ENCODE measurements at regions of chr12 and their contacts with region 1.

Region 1: GRCh38 chr12:8078398-8078797 is 3.7 kb upstream of the NECAP1 start:
- DNase-seq: peak; percentile 84
- H3K4me3 ChIP-seq: no peak overlapping the region
- H3K27ac ChIP-seq: no peak overlapping the region
- H3K4me1 ChIP-seq: peaks cover 22% of the 10 kb centered on the region
- H3K27me3 ChIP-seq: no peaks in the 10 kb centered on the region
- CTCF ChIP-seq: peak; percentile 28 to 49
- POLR2A ChIP-seq: no peak

Region 2: GRCh38 chr12:7832059-7832696 is 246.2 kb before region 1 on chr12:
- CTCF ChIA-PET with region 1: interaction called, 11 read pairs
- POLR2A ChIA-PET with region 1: no interaction called
- dilution Hi-C with region 1: no loop called
- intact Hi-C with region 1: no loop called
- DNase-seq: peak; percentile 58
- H3K4me3 ChIP-seq: no peak overlapping the region
- H3K27ac ChIP-seq: no peak overlapping the region
- H3K4me1 ChIP-seq: no peaks in the 10 kb centered on the region
- H3K27me3 ChIP-seq: peaks cover 0 to 2% of the 10 kb centered on the region in 2 experiments
- CTCF ChIP-seq: peak; percentile 44 to 45
- POLR2A ChIP-seq: no peak

Region 3: GRCh38 chr12:8026291-8026900 is 52.0 kb before region 1 on chr12:
- CTCF ChIA-PET with region 1: interaction called, 7 read pairs
- POLR2A ChIA-PET with region 1: no interaction called
- dilution Hi-C with region 1: no loop called
- intact Hi-C with region 1: loop called (anchors 2 kb)
- DNase-seq: peak; percentile 99
- H3K4me3 ChIP-seq: peak overlapping the region; percentile 57 to 97 (median 77)
- H3K27ac ChIP-seq: peak overlapping the region; percentile 100
- H3K4me1 ChIP-seq: peaks cover 3% of the 10 kb centered on the region
- H3K27me3 ChIP-seq: no peaks in the 10 kb centered on the region
- CTCF ChIP-seq: no peak
- POLR2A ChIP-seq: peak; percentile 41

Region 4: DNA sequence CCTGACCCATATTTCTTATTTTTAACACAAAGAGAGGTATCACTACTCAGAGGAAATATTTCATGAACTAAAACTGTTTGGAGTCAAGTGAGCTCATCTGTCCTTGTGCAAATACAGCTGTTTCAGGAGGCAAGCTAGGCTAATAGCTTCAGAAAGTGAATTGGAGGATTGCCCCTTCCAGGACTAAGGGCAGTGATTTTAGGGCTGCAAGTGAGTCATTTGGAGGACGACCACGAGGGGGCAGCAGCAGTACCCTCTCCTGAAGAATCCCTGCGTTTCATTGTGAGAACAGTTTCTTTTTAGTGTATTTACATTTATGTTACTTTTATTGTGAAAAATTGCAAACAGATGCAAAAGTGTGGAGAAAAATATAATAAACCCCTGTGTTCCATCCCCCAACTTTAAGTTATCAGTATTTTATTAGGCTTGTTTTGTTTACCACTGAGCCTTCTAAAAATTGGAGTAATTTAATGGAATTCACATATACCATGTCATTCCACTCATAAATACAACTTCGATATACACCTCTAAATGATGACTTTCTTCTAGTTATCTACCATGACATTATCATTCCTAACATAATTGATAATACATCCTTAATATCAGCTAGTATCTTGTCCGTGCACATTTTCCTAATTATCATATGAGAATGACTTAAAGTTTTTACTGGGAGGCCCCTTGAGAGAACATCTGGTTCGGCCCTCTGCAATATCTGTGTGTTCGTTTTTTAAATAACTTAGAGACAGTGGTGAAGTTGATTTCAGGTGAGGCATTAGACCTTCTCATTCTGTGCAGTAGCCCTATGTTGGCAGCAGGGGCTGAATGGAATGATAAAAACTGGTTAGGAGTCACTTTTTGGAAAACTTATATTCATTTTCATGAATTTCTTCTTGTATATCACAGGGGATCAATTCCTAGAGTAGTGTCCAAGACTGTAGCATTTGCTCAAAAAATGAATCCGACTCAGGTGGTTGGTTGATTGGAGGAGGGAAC is 32.1 kb before region 1 on chr12:
- CTCF ChIA-PET with region 1: interaction called, 254 read pairs
- POLR2A ChIA-PET with region 1: no interaction called
- dilution Hi-C with region 1: no loop called
- intact Hi-C with region 1: loop called (anchors 1 kb)
- DNase-seq: peak; percentile 81
- H3K4me3 ChIP-seq: no peak overlapping the region
- H3K27ac ChIP-seq: no peak overlapping the region
- H3K4me1 ChIP-seq: no peaks in the 10 kb centered on the region
- H3K27me3 ChIP-seq: no peaks in the 10 kb centered on the region
- CTCF ChIP-seq: peak; percentile 83 to 85
- POLR2A ChIP-seq: no peak

Region 5: DNA sequence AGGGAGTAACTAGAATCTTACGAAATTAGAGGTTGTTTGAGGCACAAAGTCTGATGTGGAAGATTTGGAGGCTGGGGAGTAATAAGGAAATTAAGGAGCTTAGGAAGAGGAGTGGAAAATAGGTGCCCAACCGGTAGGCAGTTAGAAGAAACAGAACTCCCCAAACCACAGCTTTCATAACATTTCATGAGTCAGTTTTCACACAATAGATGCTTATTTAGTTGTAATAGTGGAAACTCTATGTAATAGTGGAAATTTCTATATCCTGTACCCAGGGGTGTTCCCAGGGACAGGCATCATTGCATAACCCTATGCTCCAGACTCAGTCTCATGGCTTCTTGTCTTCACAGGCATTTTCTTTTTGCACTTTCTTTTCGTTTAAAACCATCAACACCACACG is 20.6 kb before region 1 on chr12:
- CTCF ChIA-PET with region 1: interaction called, 18 read pairs
- POLR2A ChIA-PET with region 1: no interaction called
- dilution Hi-C with region 1: no loop called
- intact Hi-C with region 1: no loop called
- DNase-seq: no peak
- H3K4me3 ChIP-seq: no peak overlapping the region
- H3K27ac ChIP-seq: no peak overlapping the region
- H3K4me1 ChIP-seq: no peaks in the 10 kb centered on the region
- H3K27me3 ChIP-seq: no peaks in the 10 kb centered on the region
- CTCF ChIP-seq: no peak
- POLR2A ChIP-seq: no peak